ENCODE measurements at regions of chr16 and their contacts with region 1.

Region 1: GRCh38 chr16:49921791-49922456 is 66.0 kb upstream of the ZNF423 start:
- DNase-seq: peak; percentile 59 to 87 (median 70)
- ATAC-seq: peak; percentile 80 to 81
- H3K4me3 ChIP-seq: no peak overlapping the region
- H3K27ac ChIP-seq: no peak overlapping the region
- H3K4me1 ChIP-seq: no peaks in the 10 kb centered on the region
- H3K27me3 ChIP-seq: no peaks in the 10 kb centered on the region

Region 2: GRCh38 chr16:49407873-49408550 is 513.9 kb before region 1 on chr16:
- intact Hi-C with region 1: loop called (anchors 2 to 5 kb)
- DNase-seq: peak; percentile 88 to 95 (median 94)
- ATAC-seq: peak; percentile 97 to 98
- H3K4me3 ChIP-seq: no peak overlapping the region
- H3K27ac ChIP-seq: no peak overlapping the region
- H3K4me1 ChIP-seq: no peaks in the 10 kb centered on the region
- H3K27me3 ChIP-seq: no peaks in the 10 kb centered on the region

Region 3: DNA sequence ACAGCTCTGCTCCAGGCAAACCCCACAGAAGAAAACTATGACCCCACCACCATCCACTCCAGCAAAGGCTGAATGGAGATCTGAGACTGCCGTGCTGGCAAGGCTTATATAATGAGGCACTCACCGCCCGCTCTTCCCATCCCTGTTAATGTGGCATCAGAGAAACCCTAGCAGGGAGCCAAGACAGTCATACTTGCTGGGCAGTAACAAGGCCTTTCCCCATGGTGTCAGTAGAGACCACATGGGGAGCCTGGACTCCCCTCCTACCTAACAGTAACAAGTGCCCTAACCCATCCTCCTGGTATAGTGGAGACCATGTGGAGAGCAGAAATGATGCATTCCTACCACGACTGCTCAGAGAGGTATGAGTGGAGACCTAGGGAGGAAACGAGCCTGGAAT is 313.1 kb before region 1 on chr16:
- intact Hi-C with region 1: loop called in 2 of 4 experiments (anchors 5 kb)
- DNase-seq: no peak
- ATAC-seq: peak; percentile 83 to 89
- H3K4me3 ChIP-seq: no peak overlapping the region
- H3K27ac ChIP-seq: no peak overlapping the region
- H3K4me1 ChIP-seq: no peaks in the 10 kb centered on the region
- H3K27me3 ChIP-seq: no peaks in the 10 kb centered on the region

Measured in right cardiac atrium (tissue), 5 donors.